ENCODE measurements at regions of chr20 and their contacts with region 1.

Region 1: GRCh38 chr20:44609511-44610312 is 27.3 kb downstream of the PKIG start:
- H3K4me3 Mint-ChIP-seq: peak overlapping the region; percentile 70
- H3K27ac Mint-ChIP-seq: peak overlapping the region; percentile 51
- H3K4me1 Mint-ChIP-seq: peaks cover 10% of the 10 kb centered on the region
- H3K27me3 Mint-ChIP-seq: no peaks in the 10 kb centered on the region

Region 2: GRCh38 chr20:44388466-44389023 is 221.2 kb before region 1 on chr20:
- intact Hi-C with region 1: loop called (anchors 1 kb)
- H3K4me3 Mint-ChIP-seq: no peak overlapping the region
- H3K27ac Mint-ChIP-seq: no peak overlapping the region
- H3K4me1 Mint-ChIP-seq: peaks cover 9% of the 10 kb centered on the region
- H3K27me3 Mint-ChIP-seq: peaks cover 16% of the 10 kb centered on the region

Region 3: DNA sequence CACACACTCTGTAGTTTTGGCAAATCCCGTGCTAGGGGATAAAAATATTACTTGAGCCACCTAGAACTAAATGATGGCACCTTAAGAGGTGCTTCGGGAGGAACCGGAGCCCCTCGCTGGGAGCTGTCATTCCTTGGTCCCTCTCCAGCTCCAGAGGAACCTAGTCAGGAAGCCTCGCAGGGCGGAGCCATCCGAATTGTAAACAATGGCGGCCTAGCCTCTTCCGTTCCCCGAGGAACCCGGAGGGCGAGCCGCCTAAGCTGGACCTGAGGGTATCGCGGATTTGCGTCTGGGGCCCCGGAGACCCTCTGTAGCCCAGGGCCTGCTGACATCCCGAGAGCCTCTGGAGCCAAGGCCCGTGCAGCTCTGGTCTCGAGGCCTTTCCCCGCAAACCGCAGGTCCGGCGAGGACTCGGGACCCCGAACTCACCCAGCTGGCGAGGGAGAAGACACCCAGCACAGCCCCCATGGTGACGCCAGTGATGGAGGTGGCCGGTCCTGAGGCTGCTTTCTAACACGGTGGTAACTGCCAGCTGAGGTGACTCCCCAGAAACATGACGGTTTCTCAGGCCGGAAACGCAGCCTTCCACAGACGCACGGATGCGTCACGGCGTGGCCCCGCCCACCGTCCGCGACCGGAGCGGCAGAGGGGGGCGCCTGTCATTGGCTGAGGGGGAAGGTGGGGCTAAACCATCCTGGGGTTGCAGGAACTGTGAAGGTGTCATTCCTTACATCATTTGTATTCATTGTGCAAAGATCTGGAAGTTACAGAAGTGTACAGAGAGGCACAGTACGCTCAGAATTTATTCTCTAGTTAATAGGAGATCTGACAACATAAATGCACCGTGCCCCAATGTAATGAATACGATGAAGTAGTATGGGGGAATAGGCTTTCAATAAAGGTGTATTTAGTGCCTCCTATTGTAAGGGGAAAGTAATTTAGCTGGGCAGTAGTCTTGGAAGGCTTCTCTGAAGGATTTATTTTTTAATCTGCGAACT is 87.9 kb before region 1 on chr20 and contains the start of gene SERINC3:
- intact Hi-C with region 1: loop called (anchors 2 kb)
- H3K4me3 Mint-ChIP-seq: peak within 1 kb of the TSS; percentile 82
- H3K27ac Mint-ChIP-seq: peak within 1 kb of the TSS; percentile 94
- H3K4me1 Mint-ChIP-seq: peaks cover 35% of the 10 kb centered on the region
- H3K27me3 Mint-ChIP-seq: no peaks in the 10 kb centered on the region

Region 4: GRCh38 chr20:44576297-44576696 is 33.4 kb before region 1 on chr20:
- intact Hi-C with region 1: loop called (anchors 1 kb)
- H3K4me3 Mint-ChIP-seq: no peak overlapping the region
- H3K27ac Mint-ChIP-seq: no peak overlapping the region
- H3K4me1 Mint-ChIP-seq: peaks cover 17% of the 10 kb centered on the region
- H3K27me3 Mint-ChIP-seq: no peaks in the 10 kb centered on the region

Region 5: GRCh38 chr20:44706301-44707017 is 96.7 kb after region 1 on chr20:
- intact Hi-C with region 1: no loop called
- H3K4me3 Mint-ChIP-seq: no peak overlapping the region
- H3K27ac Mint-ChIP-seq: no peak overlapping the region
- H3K4me1 Mint-ChIP-seq: peaks cover 11% of the 10 kb centered on the region
- H3K27me3 Mint-ChIP-seq: peaks cover 9% of the 10 kb centered on the region